Heart right ventricle (tissue), 16 donors: ENCODE measurements at regions of chr15 and their contacts with region 1.

Region 1: DNA sequence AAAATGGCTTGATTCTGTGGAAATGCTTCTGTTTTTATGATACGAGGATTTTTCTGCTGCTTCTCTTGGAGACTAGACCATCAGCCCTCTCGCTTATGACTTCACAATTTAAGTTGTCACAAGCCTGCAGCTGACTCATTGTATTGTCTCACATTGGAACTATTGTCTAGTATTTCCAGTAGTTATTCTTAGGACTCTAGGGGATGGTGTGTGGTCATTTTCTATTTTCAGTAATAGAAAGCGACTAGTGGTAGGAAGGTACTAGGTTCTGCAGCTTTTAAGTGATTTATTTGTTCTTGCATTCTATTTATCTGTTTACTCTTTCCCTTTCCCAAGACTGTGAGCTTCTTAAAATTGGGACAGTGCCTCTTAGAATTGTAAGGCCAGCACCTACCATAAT is 66.3 kb upstream of the CRTC3 start:
- DNase-seq: peak in 1 of 2 donors; percentile 65
- ATAC-seq: peak; percentile 83 to 95 (median 94)
- H3K4me3 ChIP-seq: no peak overlapping the region
- H3K27ac ChIP-seq: peak overlapping the region; percentile 67 to 93 (median 87)
- H3K4me1 ChIP-seq: peaks cover 14 to 81% (median 56%) of the 10 kb centered on the region in 9 donors
- H3K27me3 ChIP-seq: no peaks in the 10 kb centered on the region
- CTCF ChIP-seq: peak in 5 of 9 donors; percentile 10 to 38 (median 31)

Region 2: DNA sequence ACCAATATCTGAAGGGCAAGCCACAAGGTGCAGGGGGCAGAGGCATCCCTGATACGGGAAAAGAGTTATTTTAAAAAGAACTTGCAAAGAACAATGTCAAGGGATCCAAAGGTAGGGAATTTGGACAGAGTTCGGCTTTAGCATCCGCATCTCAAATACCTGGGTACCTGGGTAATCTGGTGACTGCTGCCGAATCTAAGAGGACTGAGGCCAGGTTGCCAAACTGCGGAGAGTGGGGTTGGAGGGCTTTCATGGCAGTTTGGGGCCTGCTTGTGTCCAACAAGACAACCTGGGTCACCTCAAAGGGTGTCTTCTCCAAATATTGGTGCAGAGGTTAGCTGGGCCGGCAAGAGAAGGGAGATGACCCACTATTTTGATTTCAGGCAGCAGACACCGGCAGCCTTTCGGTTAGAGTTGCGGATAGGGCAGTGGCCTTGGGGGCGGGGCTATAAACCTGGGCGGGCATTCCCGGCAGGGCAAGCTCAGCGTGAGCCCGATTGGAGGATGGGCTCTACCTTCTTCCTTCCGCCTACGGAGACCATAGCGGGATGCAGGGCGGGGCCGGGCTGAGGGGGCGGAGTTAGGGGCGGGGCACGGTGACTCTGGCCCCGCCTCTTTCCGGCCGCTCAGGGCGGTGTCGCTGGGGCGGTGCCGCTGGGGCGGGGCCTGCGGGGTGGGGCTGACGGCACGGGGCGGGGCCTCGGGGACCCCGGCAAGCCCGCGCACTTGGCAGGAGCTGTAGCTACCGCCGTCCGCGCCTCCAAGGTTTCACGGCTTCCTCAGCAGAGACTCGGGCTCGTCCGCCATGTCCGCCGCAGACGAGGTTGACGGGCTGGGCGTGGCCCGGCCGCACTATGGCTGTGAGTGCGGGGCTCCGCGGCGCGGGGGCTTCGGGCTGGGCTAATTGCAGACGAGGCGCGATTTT is 75.6 kb before region 1 on chr15 and contains the start of gene IQGAP1:
- intact Hi-C with region 1: loop called in 2 of 10 experiments (anchors 2 to 5 kb)
- DNase-seq: peak; percentile 98
- ATAC-seq: peak; percentile 96 to 99 (median 97)
- H3K4me3 ChIP-seq: peak within 1 kb of the TSS; percentile 57 to 97 (median 84)
- H3K27ac ChIP-seq: peak within 1 kb of the TSS; percentile 81 to 99 (median 97)
- H3K4me1 ChIP-seq: peaks cover 15 to 46% (median 43%) of the 10 kb centered on the region in 9 donors
- H3K27me3 ChIP-seq: no peaks in the 10 kb centered on the region
- CTCF ChIP-seq: no peak
- total RNA-seq, gene IQGAP1: 28.6 to 81.7 (median 35.0) TPM

Region 3: DNA sequence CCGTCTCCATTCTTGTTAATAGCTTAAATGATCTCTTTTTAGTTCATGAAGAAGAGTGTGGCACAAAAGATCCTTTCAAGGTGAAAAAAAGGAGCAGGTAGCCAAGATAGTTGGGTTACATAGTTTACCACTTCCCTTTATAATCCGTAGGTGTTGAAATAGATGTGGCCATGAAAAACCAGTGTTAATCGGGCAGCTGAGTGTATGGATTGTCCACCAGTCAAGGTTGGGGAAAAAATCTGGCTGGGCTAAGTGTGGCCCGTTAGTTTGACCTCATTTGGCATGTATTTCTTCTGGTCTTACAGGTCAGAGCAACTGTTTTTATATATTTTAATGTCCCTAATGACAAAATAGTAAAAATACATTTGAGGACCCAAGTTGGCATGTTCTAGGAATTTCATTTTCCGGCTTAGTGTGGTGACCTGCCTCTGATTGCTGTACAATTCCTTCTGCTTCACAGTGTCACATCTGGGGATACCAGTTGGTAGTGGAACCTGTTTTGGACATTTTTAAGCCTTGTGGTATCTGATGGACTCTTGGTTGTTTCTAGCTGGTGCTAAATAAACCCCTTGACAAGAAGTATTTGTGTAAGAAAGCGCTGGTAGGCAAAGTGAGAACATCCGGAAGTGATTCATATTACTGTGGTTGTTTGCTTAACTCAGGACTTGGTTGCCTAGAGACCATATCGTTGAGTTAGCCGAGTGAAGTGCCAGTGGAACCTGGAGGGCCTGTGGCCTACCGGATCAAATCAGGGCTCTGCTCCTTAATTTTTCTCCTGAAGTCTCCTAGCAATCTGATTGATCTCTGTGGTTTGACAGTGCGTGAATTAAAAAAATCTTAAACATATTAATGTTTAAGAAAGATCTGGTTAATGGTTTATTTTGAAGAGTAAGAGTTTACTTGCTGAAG is 62.7 kb before region 1 on chr15:
- intact Hi-C with region 1: loop called in 3 of 10 experiments (anchors 5 kb)
- DNase-seq: peak; percentile 39 to 85
- ATAC-seq: peak; percentile 93 to 98 (median 97)
- H3K4me3 ChIP-seq: peak overlapping the region in 7 of 10 donors; percentile 1 to 36 (median 20)
- H3K27ac ChIP-seq: peak overlapping the region; percentile 69 to 93 (median 87)
- H3K4me1 ChIP-seq: peaks cover 5 to 98% (median 78%) of the 10 kb centered on the region in 9 donors
- H3K27me3 ChIP-seq: no peaks in the 10 kb centered on the region
- CTCF ChIP-seq: no peak